IMR-90 (cell line): ENCODE measurements at regions of chr2 and their contacts with region 1.

Region 1: DNA sequence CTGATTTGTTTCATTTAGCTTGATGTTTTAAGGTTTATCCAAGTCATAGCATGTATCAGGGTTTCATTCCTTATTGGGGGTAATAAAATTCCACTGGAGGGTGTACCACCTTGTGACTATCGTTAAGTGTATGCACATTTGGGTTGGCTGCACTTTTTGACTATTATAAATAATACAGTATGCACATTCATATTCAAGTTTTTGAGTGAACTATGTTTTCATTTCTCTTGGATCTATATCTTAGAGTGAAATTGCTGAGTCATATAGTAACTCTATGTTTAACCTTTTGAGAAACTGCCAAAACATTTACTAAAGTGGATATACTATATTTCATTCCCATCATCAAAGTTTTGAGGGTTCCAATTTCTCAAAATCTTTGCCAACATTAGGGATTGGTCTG is 952.7 kb downstream of the TDRD15 start:
- DNase-seq: no peak
- ATAC-seq: no peak
- H3K4me3 ChIP-seq: no peak overlapping the region
- H3K27ac ChIP-seq: no peak overlapping the region
- H3K4me1 ChIP-seq: no peaks in the 10 kb centered on the region
- H3K27me3 ChIP-seq: no peaks in the 10 kb centered on the region
- CTCF ChIP-seq: no peak
- POLR2A ChIP-seq: no peak
- RAD21 ChIP-seq: no peak

Region 2: DNA sequence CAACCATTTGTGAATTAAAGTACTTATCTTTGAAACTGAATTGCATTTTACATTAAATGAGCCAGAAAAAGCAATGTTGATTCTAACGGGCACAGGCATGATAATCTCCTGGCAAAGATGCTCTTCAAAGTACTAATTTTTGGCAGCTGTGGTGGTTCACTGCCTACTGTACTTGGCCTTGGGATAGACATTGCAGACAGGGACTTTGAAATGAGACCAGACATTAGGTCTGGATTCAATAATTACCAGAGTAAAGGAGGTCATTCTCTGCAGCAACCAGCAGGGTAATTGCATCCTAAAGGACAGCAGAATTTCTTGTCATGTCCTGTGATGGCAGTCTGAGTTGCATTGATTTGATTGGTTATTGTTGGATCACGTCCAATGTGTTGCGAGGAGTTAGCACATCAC is 33.8 kb after region 1 on chr2:
- CTCF ChIA-PET with region 1: interaction called, 3 read pairs
- POLR2A ChIA-PET with region 1: no interaction called
- dilution Hi-C with region 1: no loop called
- in situ Hi-C with region 1: no loop called
- intact Hi-C with region 1: loop called (anchors 5 kb)
- DNase-seq: no peak
- ATAC-seq: no peak
- H3K4me3 ChIP-seq: no peak overlapping the region
- H3K27ac ChIP-seq: no peak overlapping the region
- H3K4me1 ChIP-seq: no peaks in the 10 kb centered on the region
- H3K27me3 ChIP-seq: no peaks in the 10 kb centered on the region
- CTCF ChIP-seq: no peak
- POLR2A ChIP-seq: no peak
- RAD21 ChIP-seq: no peak